Mammary epithelial cell (primary cell): ENCODE measurements at regions of chr7 and their contacts with region 1.

Region 1: DNA sequence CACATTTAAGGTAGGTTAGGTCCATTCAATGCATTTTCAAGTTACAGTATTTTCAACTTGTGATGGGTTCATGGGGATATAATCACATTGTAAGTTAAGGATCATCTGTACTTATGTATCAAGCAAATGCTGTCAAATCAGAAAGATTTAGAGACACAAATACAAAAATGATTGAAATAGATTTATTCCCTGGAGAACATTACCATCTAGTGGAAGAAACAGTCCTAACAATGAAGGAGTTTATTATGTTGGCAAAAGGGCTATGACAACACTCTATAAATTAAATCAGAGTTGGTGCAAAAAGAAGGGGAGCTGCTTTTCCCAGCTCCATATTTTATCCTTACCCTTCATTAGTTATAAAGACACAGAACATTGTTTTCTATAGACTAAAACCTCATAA is 69.0 kb downstream of the PRSS58 start:
- DNase-seq: peak; percentile 16
- H3K4me3 ChIP-seq: no peak overlapping the region
- H3K27ac ChIP-seq: no peak overlapping the region
- H3K4me1 ChIP-seq: no peaks in the 10 kb centered on the region
- H3K27me3 ChIP-seq: no peaks in the 10 kb centered on the region
- CTCF ChIP-seq: peak; percentile 27 to 53

Region 2: GRCh38 chr7:141754939-141755338 is 433.9 kb before region 1 on chr7:
- CTCF ChIA-PET with region 1: no interaction called
- dilution Hi-C with region 1: no loop called
- in situ Hi-C with region 1: no loop called
- intact Hi-C with region 1: loop called (anchors 1 kb)
- DNase-seq: peak; percentile 11
- H3K4me3 ChIP-seq: no peak overlapping the region
- H3K27ac ChIP-seq: no peak overlapping the region
- H3K4me1 ChIP-seq: no peaks in the 10 kb centered on the region
- H3K27me3 ChIP-seq: no peaks in the 10 kb centered on the region
- CTCF ChIP-seq: peak; percentile 42 to 62

Region 3: GRCh38 chr7:142024547-142024946 is 164.3 kb before region 1 on chr7:
- CTCF ChIA-PET with region 1: no interaction called
- dilution Hi-C with region 1: no loop called
- in situ Hi-C with region 1: no loop called
- intact Hi-C with region 1: loop called (anchors 5 kb)
- DNase-seq: peak; percentile 92
- H3K4me3 ChIP-seq: no peak overlapping the region
- H3K27ac ChIP-seq: peak overlapping the region; percentile 92
- H3K4me1 ChIP-seq: peaks cover 44% of the 10 kb centered on the region
- H3K27me3 ChIP-seq: no peaks in the 10 kb centered on the region
- CTCF ChIP-seq: peak; percentile 17 to 46

Region 4: GRCh38 chr7:142111499-142111898 is 77.3 kb before region 1 on chr7 and contains the start of gene MGAM2:
- CTCF ChIA-PET with region 1: no interaction called
- dilution Hi-C with region 1: no loop called
- in situ Hi-C with region 1: no loop called
- intact Hi-C with region 1: no loop called
- DNase-seq: no peak
- H3K4me3 ChIP-seq: no peak within 1 kb of the TSS
- H3K27ac ChIP-seq: no peak within 1 kb of the TSS
- H3K4me1 ChIP-seq: no peaks in the 10 kb centered on the region
- H3K27me3 ChIP-seq: no peaks in the 10 kb centered on the region
- CTCF ChIP-seq: no peak
- total RNA-seq, gene MGAM2: 1.3 TPM in 1 of 2 donors, not detected in the other

Region 5: GRCh38 chr7:142153400-142153799 is 35.4 kb before region 1 on chr7:
- CTCF ChIA-PET with region 1: no interaction called
- dilution Hi-C with region 1: no loop called
- in situ Hi-C with region 1: no loop called
- intact Hi-C with region 1: loop called (anchors 1 kb)
- DNase-seq: peak; percentile 22
- H3K4me3 ChIP-seq: no peak overlapping the region
- H3K27ac ChIP-seq: no peak overlapping the region
- H3K4me1 ChIP-seq: no peaks in the 10 kb centered on the region
- H3K27me3 ChIP-seq: no peaks in the 10 kb centered on the region
- CTCF ChIP-seq: peak; percentile 43 to 73